Activated T-helper 1 cell treated with anti-CD3 and anti-CD28 coated beads, Interleukin-12 subunit alpha, Interleukin-12 subunit beta, Interleukin-2, Interleukin-4 antibody, amounts not matched to agents 30 ng/mL and 10 ng/mL and 1 ng/mL, durations not matched to agents 14 hours and 24 hours and 36 hours (primary cell): ENCODE measurements at regions of chr16 and their contacts with region 1.

Region 1: GRCh38 chr16:79278506-79278905 is 322.0 kb downstream of the MAF start:
- DNase-seq: peak; percentile 55
- H3K4me3 Mint-ChIP-seq: peak overlapping the region; percentile 51
- H3K27ac Mint-ChIP-seq: peak overlapping the region; percentile 67
- H3K4me1 Mint-ChIP-seq: peaks cover 67% of the 10 kb centered on the region
- H3K27me3 Mint-ChIP-seq: peaks cover 17% of the 10 kb centered on the region

Region 2: GRCh38 chr16:79019858-79020257 is 258.6 kb before region 1 on chr16:
- intact Hi-C with region 1: no loop called
- DNase-seq: no peak
- H3K4me3 Mint-ChIP-seq: no peak overlapping the region
- H3K27ac Mint-ChIP-seq: no peak overlapping the region
- H3K4me1 Mint-ChIP-seq: no peaks in the 10 kb centered on the region
- H3K27me3 Mint-ChIP-seq: no peaks in the 10 kb centered on the region

Region 3: GRCh38 chr16:79217375-79218011 is 61.0 kb before region 1 on chr16:
- intact Hi-C with region 1: loop called (anchors 2 kb)
- DNase-seq: peak; percentile 19
- H3K4me3 Mint-ChIP-seq: no peak overlapping the region
- H3K27ac Mint-ChIP-seq: no peak overlapping the region
- H3K4me1 Mint-ChIP-seq: peaks cover 19% of the 10 kb centered on the region
- H3K27me3 Mint-ChIP-seq: no peaks in the 10 kb centered on the region

Region 4: DNA sequence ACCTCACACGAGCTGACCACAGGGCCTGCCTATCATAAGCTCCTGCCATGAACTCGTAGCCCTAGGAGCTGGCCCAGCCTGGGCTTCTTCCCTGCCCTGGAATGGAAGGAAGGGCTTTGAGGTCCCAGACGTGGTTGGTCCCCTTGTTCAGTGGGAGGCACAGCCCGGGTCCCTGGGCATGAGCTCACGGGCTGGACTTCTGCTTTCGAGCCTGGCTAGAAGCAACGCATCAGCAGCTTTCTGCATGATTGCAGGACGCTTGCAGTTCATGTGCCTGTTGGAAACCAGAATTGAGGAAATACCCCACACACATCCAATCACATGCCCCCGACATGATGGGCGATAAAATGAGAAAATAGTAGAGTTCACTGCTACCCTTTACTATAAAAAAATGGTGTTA is 28.7 kb after region 1 on chr16:
- intact Hi-C with region 1: no loop called
- DNase-seq: no peak
- H3K4me3 Mint-ChIP-seq: no peak overlapping the region
- H3K27ac Mint-ChIP-seq: no peak overlapping the region
- H3K4me1 Mint-ChIP-seq: no peaks in the 10 kb centered on the region
- H3K27me3 Mint-ChIP-seq: peaks cover 19% of the 10 kb centered on the region